Left cardiac atrium (tissue), 4 donors: ENCODE measurements at regions of chr17 and their contacts with region 1.

Region 1: DNA sequence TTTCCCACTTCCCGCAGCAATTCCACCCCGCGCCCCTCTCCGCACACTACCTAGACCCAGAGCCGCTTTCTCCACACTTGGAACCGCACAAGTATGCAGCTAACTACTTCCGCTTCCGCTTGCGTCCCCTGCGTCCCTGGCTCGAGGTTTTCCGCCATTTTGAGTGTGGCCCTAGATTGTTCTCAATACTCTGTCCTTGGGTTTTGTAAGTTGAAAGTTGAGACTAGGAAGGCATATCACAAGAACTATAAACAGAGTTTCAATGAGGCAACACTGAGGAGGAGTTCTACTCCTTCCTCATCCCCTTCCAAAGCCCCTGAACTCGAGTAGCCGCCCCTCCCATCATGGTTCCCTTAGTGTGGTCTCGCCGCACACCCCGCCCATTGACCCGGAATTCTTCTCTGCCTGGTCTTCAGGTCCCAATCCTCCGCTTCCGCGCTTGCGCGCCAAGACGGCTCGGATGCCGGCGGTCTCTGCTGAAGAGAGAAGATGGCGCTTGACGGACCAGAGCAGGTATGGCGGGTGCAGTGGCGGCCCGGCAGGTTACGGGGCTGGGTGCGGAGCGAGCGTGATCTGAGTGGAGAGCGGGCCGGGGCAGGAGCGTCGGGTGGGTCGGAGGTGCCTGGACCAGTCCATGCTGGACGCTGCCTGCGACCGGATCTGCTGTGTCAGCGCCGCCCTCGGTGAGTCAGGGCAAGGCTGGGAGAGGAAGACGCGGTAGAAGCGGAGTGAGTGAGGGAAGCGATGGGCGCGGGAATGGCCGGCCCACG is at the starts of genes FTSJ3 and PSMC5:
- DNase-seq: peak; percentile 96
- ATAC-seq: peak; percentile 94 to 95
- total RNA-seq, gene FTSJ3: 33.1 to 38.1 TPM
- total RNA-seq, gene PSMC5: 122 to 143 TPM

Region 2: GRCh38 chr17:63735691-63736090 is 91.5 kb before region 1 on chr17:
- intact Hi-C with region 1: no loop called
- DNase-seq: no peak
- ATAC-seq: no peak

Region 3: GRCh38 chr17:63773381-63774140 is 53.6 kb before region 1 on chr17 and contains the start of gene CCDC47:
- intact Hi-C with region 1: loop called in 1 of 2 experiments (anchors 10 kb)
- DNase-seq: peak; percentile 98
- ATAC-seq: peak; percentile 94 to 96
- total RNA-seq, gene CCDC47: 88.9 to 139 TPM

Region 4: DNA sequence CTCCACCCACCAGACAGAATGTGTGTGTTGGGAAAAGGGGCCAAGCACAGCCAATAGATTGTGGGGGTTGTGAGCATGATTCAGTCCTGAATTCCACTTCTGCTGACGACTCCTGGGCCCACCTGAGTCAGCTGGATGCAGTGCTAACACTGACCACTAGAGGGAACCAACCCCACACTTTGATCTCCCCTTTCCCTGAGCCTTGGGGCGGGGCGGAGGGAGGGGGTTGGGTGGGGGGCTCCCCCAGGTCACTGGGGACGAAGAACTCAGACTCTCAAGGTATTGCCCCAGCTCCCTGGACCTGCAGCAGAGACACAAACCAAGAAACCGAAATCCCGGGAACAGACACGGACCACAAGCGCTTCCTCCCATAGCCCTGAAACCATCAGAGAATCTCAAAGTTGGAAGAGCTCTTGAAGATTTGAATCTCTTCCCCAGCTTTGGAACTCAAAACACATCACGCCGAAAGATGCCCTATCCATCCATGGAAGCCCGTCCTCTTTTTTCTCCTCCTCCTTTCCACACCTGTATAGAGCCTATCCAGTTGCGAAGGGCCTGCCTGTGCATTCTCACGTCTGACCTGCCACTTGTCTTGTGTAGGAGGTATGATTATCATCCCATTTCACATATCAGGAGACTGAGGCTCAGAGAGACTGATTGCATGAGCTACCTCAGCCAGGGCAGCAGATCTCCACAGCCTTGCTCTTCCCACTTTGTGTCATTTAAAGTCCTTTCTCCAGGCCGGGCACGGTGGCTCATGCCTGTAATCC is 84.7 kb after region 1 on chr17:
- intact Hi-C with region 1: no loop called
- DNase-seq: no peak
- ATAC-seq: peak; percentile 65 to 69